ENCODE measurements at regions of chr9 and their contacts with region 1.

Region 1: GRCh38 chr9:128275996-128276573 is at the starts of genes GOLGA2 and SWI5:
- DNase-seq: peak; percentile 100
- ATAC-seq: peak; percentile 98
- total RNA-seq, gene GOLGA2: 76.4 TPM
- total RNA-seq, gene SWI5: 14.9 TPM

Region 2: DNA sequence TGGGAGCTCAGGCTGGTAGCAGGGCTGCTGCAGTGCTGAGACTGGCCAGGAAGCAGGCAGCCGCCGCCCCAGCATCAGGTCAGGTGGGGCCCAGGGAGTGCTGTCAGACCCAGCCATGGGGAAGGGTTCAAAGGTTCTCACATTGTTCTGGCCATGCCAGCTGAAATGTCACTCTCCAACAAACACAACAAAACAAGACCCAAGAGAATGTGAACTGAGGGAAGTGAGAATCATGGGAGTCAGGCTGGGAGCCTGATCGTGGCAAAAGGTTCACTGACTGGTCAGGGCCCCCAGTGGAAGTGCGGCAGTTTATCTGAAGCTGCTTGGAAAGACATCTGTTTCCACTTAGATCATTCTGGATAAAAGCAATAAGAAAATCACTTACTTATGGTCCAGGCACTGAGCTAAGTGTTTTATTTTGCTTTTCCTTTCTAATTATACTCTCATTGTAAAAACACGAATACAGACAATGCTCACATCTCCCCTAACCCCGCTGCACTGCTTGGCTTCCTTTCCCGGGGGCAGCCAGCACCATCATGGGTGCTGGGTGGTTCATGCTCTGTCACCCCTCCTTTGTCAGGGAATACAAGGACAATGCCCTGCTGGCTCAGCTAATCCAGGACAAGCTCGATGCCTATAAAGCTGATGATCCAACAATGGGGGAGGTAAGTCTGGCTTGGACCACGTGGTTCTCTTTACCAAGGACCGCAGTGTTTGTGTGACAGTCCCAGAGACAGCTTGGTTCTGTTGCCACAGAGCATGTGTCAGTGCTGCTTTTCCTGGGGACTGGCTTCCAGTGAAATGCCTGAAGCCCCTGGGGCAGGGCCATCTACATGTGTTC is 611.2 kb before region 1 on chr9:
- intact Hi-C with region 1: no loop called
- DNase-seq: no peak
- ATAC-seq: no peak

Region 3: GRCh38 chr9:128203024-128203706 is 72.9 kb before region 1 on chr9 and contains the start of gene DNM1:
- intact Hi-C with region 1: loop called (anchors 5 kb)
- DNase-seq: peak; percentile 86
- ATAC-seq: peak; percentile 88
- total RNA-seq, gene DNM1: 6.1 TPM

Region 4: DNA sequence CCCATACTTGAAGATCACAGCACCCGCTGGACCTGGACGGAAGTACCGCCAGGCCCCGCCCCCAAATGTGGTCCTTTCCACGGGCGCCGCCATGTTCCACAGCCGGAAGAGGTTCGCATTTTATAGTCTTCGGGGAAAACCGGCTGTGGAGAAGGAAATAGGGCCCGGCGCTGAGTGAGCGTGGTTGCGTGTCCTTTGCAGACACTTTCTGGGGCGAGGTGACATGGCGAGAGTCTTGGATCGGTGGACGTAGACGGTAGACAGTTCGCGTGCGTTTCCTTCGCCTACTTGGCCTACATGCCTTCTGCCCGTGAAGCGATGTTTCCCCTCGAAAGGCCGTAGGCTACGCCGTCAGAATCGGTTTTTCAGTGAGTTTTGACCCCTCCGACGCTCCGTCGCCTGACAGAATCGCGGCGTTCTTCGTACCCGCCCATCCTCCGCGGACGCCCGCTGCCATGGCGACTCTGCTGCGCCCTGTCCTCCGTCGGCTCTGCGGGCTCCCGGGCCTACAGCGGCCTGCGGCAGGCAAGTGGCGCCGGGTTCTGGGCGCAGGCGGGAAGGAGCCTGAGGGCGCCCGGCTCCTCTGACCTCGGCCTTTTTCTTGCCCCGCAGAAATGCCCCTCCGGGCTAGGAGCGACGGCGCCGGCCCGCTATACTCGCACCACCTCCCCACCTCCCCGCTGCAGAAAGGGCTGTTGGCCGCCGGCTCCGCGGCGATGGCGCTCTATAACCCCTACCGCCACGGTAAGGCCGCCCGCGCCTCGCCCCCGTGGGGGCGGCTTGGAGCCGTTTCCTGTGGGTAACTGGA is 46.5 kb after region 1 on chr9 and contains the starts of genes COQ4 and TRUB2:
- intact Hi-C with region 1: loop called (anchors 5 kb)
- DNase-seq: peak; percentile 96
- ATAC-seq: peak; percentile 98
- total RNA-seq, gene COQ4: 29.1 TPM
- total RNA-seq, gene TRUB2: 37.4 TPM

Region 5: DNA sequence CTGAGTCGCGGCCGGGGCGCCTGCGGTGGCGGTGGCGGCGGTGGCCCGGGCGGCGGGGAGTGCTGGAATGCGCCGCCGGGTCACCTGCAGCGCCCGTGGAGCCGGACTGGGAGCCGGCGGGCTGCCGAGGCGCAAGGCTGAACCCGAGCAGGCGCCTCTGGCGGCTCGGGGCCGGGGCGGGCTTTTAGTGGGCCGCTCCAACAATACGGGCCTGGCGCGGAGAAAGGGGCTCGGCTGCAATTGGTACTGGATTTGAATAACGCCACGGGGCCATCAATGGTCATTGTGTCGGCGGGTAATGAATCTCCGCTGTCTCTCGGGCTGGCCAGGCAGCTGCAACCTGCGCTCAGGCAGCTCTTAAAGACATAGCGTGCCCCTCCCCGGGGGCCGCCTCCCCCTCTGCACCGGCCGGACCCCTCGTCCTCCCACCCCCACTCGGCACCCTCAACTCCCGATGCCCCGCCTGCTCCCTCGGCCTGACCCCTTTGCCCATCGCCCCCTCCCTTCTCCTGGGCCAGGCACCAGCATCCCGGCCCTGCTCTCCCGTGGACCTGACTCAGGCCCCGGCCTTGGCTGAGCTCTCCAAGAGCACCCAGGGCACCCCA is 117.2 kb after region 1 on chr9:
- intact Hi-C with region 1: no loop called
- DNase-seq: no peak
- ATAC-seq: no peak

Measured in Right ventricle myocardium inferior (tissue), 1 donor.